GM12878 (cell line): ENCODE measurements at regions of chr4 and their contacts with region 1.

Region 1: GRCh38 chr4:81827577-81828202 is 356.0 kb upstream of the RASGEF1B start:
- DNase-seq: peak; percentile 20
- ATAC-seq: peak; percentile 84
- H3K4me3 ChIP-seq: no peak overlapping the region
- H3K27ac ChIP-seq: no peak overlapping the region
- H3K4me1 ChIP-seq: no peaks in the 10 kb centered on the region
- H3K27me3 ChIP-seq: no peaks in the 10 kb centered on the region; a peak in 1 of 4 replicates
- CTCF ChIP-seq: no peak
- EP300 ChIP-seq: no peak
- POLR2A ChIP-seq: no peak
- RAD21 ChIP-seq: no peak

Region 2: GRCh38 chr4:81740487-81740886 is 87.2 kb before region 1 on chr4:
- CTCF ChIA-PET with region 1: no interaction called
- POLR2A ChIA-PET with region 1: no interaction called
- RAD21 ChIA-PET with region 1: no interaction called
- SMC1A ChIA-PET with region 1: no interaction called
- in situ Hi-C with region 1: no loop called
- intact Hi-C with region 1: no loop called
- DNase-seq: no peak
- ATAC-seq: no peak
- H3K4me3 ChIP-seq: no peak overlapping the region
- H3K27ac ChIP-seq: no peak overlapping the region
- H3K4me1 ChIP-seq: no peaks in the 10 kb centered on the region
- H3K27me3 ChIP-seq: no peaks in the 10 kb centered on the region
- CTCF ChIP-seq: no peak
- EP300 ChIP-seq: no peak
- POLR2A ChIP-seq: no peak
- RAD21 ChIP-seq: no peak

Region 3: DNA sequence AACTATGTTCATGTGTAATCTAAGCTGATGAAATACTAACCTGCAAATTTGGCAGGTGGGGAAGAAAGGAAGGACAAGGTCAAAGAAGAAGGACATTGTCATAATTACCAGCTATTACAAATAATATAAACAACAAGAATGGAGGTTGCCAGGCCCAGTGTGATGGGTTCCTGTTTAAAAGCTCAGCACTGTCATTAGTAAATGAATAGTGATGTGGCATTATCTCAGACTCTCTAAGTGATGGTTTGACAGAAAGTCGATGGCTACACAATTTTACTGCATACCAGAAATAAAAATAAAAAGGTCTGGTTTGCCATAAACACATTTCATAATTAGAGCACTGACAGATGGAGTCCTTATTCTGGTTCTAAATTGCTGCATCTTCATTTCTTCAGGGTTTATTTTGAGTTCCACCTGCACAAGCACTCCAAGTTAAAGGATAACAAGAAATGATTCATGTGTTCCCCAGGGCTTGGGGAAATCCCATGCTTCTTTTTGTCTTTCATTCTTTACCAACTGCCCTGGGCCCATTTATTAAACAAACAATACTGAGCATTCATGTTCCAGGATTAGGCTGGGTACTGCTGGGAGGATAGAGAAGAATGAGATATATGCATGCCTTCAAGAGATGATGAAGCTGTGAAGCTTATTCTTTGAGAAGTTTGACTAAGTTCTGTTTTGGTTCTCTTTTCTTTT is 11.8 kb after region 1 on chr4:
- CTCF ChIA-PET with region 1: no interaction called
- POLR2A ChIA-PET with region 1: no interaction called
- RAD21 ChIA-PET with region 1: no interaction called
- SMC1A ChIA-PET with region 1: interaction called, 4 read pairs
- in situ Hi-C with region 1: no loop called
- intact Hi-C with region 1: loop called (anchors 1 kb)
- DNase-seq: no peak
- ATAC-seq: peak; percentile 21; the same call in 1 of the 3 replicates
- H3K4me3 ChIP-seq: no peak overlapping the region
- H3K27ac ChIP-seq: no peak overlapping the region
- H3K4me1 ChIP-seq: no peaks in the 10 kb centered on the region
- H3K27me3 ChIP-seq: no peaks in the 10 kb centered on the region; a peak in 1 of 4 replicates
- CTCF ChIP-seq: no peak
- EP300 ChIP-seq: no peak
- POLR2A ChIP-seq: no peak
- RAD21 ChIP-seq: no peak